Heart right ventricle (tissue), 16 donors: ENCODE measurements at regions of chr2 and their contacts with region 1.

Region 1: GRCh38 chr2:38362232-38362631 is 14.8 kb downstream of the ATL2 start:
- DNase-seq: no peak
- ATAC-seq: no peak
- H3K4me3 ChIP-seq: no peak overlapping the region
- H3K27ac ChIP-seq: no peak overlapping the region
- H3K4me1 ChIP-seq: peaks cover 7 to 51% (median 31%) of the 10 kb centered on the region in 9 donors
- H3K27me3 ChIP-seq: no peaks in the 10 kb centered on the region
- CTCF ChIP-seq: no peak

Region 2: DNA sequence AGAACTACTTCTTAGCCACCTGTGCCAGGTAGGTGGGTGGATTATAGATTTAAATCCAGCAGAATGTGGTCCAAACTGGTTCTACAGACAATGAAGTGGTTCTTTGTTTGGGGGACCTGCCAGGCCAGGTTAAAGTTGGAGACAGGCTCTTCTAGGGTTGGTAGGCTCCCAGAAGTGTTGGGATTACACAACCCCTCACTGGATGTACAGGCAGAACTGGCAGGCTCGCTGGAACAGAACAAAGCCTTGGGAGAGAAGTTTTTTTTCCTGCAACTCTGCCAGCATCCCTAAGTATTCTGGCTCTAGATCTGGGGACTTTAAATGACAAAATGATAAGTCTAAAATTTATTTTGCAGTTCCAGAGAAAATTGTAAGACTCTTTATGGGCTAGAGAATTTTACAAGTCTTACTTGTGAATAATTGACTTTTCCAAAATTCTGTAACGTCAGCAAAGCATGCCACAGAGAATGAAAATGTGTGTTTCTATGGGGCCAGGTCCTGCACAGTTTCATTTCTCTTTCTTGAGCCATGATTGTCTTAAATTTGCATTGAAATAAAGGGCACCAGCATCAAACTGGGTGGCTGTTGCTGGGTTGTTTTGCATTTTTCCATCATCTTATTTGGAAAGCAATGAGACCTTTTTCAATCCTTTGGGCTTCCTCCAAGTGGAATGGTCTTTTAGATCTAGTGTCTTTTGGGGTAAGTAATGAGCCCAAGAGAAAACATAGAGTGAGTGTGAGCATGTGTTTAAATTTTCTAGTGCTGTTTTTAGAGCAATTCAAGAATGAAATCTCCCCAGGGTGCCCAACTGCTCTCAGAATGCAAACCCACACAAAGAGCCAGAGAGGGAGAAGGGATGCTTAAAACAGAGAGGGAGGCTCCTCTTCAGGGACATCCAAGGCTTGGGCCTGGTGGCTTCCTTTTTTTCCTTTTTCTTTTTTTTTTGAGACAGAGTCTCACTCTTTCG is 47.2 kb after region 1 on chr2:
- intact Hi-C with region 1: loop called in 1 of 10 experiments (anchors 5 kb)
- DNase-seq: peak in 1 of 2 donors; percentile 23
- ATAC-seq: peak in 3 of 8 donors; percentile 34 to 63 (median 43)
- H3K4me3 ChIP-seq: no peak overlapping the region
- H3K27ac ChIP-seq: peak overlapping the region in 1 of 10 donors; percentile 41
- H3K4me1 ChIP-seq: peaks cover 0 to 53% (median 21%) of the 10 kb centered on the region in 9 donors
- H3K27me3 ChIP-seq: no peaks in the 10 kb centered on the region
- CTCF ChIP-seq: no peak